Activated CD4-positive, alpha-beta T cell treated with anti-CD3 and anti-CD28 coated beads for 36 hours (primary cell): ENCODE measurements at regions of chr3 and their contacts with region 1.

Region 1: GRCh38 chr3:58008140-58009025 is at the start of gene FLNB:
- DNase-seq: peak; percentile 91
- ATAC-seq: peak; percentile 80
- H3K4me3 Mint-ChIP-seq: peak within 1 kb of the TSS; percentile 88
- H3K27ac Mint-ChIP-seq: peak within 1 kb of the TSS; percentile 89
- H3K4me1 Mint-ChIP-seq: peaks cover 38% of the 10 kb centered on the region
- H3K27me3 Mint-ChIP-seq: no peaks in the 10 kb centered on the region
- total RNA-seq, gene FLNB: 25.4 to 29.1 TPM

Region 2: GRCh38 chr3:58025837-58026569 is 17.6 kb after region 1 on chr3:
- CTCF ChIA-PET with region 1: interaction called, 22 read pairs
- POLR2A ChIA-PET with region 1: no interaction called
- intact Hi-C with region 1: no loop called
- DNase-seq: no peak
- ATAC-seq: no peak
- H3K4me3 Mint-ChIP-seq: no peak overlapping the region
- H3K27ac Mint-ChIP-seq: no peak overlapping the region
- H3K4me1 Mint-ChIP-seq: peaks cover 55% of the 10 kb centered on the region
- H3K27me3 Mint-ChIP-seq: no peaks in the 10 kb centered on the region

Region 3: GRCh38 chr3:58073301-58074108 is 65.1 kb after region 1 on chr3:
- CTCF ChIA-PET with region 1: no interaction called
- POLR2A ChIA-PET with region 1: no interaction called
- intact Hi-C with region 1: loop called in 1 of 2 experiments (anchors 2 kb)
- DNase-seq: no peak
- ATAC-seq: peak; percentile 31
- H3K4me3 Mint-ChIP-seq: no peak overlapping the region
- H3K27ac Mint-ChIP-seq: no peak overlapping the region
- H3K4me1 Mint-ChIP-seq: peaks cover 30% of the 10 kb centered on the region
- H3K27me3 Mint-ChIP-seq: no peaks in the 10 kb centered on the region

Region 4: GRCh38 chr3:58217209-58217811 is 208.9 kb after region 1 on chr3:
- CTCF ChIA-PET with region 1: interaction called, 7 read pairs
- POLR2A ChIA-PET with region 1: no interaction called
- intact Hi-C with region 1: loop called in 1 of 2 experiments (anchors 1 kb)
- DNase-seq: peak; percentile 76
- ATAC-seq: peak; percentile 34
- H3K4me3 Mint-ChIP-seq: peak overlapping the region; percentile 9
- H3K27ac Mint-ChIP-seq: no peak overlapping the region
- H3K4me1 Mint-ChIP-seq: peaks cover 36% of the 10 kb centered on the region
- H3K27me3 Mint-ChIP-seq: peaks cover 4% of the 10 kb centered on the region

Region 5: GRCh38 chr3:58532794-58533220 is 524.4 kb after region 1 on chr3:
- CTCF ChIA-PET with region 1: no interaction called
- POLR2A ChIA-PET with region 1: no interaction called
- intact Hi-C with region 1: loop called in 1 of 2 experiments (anchors 2 kb)
- DNase-seq: peak; percentile 92
- ATAC-seq: peak; percentile 97
- H3K4me3 Mint-ChIP-seq: no peak overlapping the region
- H3K27ac Mint-ChIP-seq: peak overlapping the region; percentile 67
- H3K4me1 Mint-ChIP-seq: peaks cover 13% of the 10 kb centered on the region
- H3K27me3 Mint-ChIP-seq: no peaks in the 10 kb centered on the region